ENCODE measurements at regions of chr2 and their contacts with region 1.

Region 1: GRCh38 chr2:9630749-9631483 is at the start of gene YWHAQ:
- DNase-seq: peak; percentile 95
- H3K4me3 Mint-ChIP-seq: peak within 1 kb of the TSS; percentile 97
- H3K27ac Mint-ChIP-seq: peak within 1 kb of the TSS; percentile 93
- H3K4me1 Mint-ChIP-seq: peaks cover 45% of the 10 kb centered on the region
- H3K27me3 Mint-ChIP-seq: no peaks in the 10 kb centered on the region
- total RNA-seq, gene YWHAQ: 248 to 261 TPM

Region 2: GRCh38 chr2:9112079-9112721 is 518.7 kb before region 1 on chr2:
- CTCF ChIA-PET with region 1: no interaction called
- intact Hi-C with region 1: no loop called
- DNase-seq: no peak
- H3K4me3 Mint-ChIP-seq: no peak overlapping the region
- H3K27ac Mint-ChIP-seq: no peak overlapping the region
- H3K4me1 Mint-ChIP-seq: no peaks in the 10 kb centered on the region
- H3K27me3 Mint-ChIP-seq: no peaks in the 10 kb centered on the region

Region 3: DNA sequence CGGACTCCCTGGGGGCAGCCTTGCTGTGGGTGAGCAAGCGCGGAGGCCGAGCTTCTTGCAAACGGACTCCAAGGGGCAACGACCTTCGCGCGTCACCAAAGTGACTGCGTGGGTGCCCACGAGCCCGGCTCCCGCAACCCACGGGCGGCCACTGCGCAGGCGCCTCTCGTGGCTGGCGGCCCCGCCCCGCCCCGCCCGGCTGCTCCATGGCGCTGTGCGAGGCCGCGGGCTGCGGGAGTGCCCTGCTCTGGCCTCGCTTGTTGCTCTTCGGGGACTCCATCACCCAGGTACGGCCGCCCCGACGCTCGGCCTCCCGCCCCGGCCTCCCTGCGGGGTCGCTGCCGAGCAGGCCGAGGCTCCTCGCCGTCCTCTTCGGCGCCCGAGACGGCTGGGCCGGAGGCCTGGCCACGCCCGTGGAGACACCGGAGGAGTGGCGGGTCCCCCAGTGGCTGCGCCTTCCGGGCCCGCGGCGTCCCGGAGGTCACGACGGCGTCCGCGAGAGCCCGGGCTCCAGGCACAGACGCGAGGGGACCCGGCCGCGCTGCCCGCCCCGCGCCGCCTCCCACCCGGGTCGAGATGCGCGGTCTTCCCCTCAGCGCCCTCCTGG is 156.5 kb before region 1 on chr2 and contains the start of gene IAH1:
- CTCF ChIA-PET with region 1: no interaction called
- intact Hi-C with region 1: loop called (anchors 2 kb)
- DNase-seq: peak; percentile 57
- H3K4me3 Mint-ChIP-seq: peak within 1 kb of the TSS; percentile 75
- H3K27ac Mint-ChIP-seq: peak within 1 kb of the TSS; percentile 72
- H3K4me1 Mint-ChIP-seq: peaks cover 33% of the 10 kb centered on the region
- H3K27me3 Mint-ChIP-seq: no peaks in the 10 kb centered on the region
- total RNA-seq, gene IAH1: 65.4 to 70.2 TPM

Region 4: DNA sequence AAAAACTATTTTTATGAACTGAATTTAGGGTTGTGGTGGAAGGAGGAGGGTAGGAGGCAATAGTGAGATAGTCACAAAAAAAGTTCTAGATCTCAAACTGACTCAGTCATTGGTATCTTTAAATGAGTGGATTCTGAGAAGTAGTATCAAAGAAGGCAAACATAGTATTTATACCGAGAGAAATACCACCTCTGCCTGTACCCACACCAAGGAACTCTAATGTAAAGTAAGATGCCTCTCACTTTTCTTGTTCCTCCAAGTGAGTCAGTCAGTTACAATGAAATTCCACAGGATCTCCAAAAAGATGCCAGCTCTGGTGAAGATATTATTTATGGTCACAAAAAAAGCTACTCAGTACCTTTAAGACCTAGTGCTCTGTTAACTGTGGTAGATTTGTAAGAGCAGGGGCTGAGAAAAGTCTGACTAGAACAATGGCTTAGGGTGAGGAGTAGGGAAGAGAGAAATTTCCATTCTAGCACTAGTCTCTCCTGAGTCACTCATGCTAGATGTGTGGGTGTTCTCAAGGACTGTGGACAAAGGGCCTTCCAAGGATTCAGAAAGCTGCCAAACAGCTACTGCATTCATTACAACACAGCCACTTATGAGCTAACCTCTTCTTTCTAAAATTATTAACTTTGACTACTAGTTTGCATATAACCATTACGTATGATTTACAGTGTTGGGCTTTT is 36.4 kb before region 1 on chr2:
- CTCF ChIA-PET with region 1: interaction called, 3 read pairs
- intact Hi-C with region 1: loop called (anchors 1 kb)
- DNase-seq: peak; percentile 21
- H3K4me3 Mint-ChIP-seq: peak overlapping the region; percentile 1
- H3K27ac Mint-ChIP-seq: peak overlapping the region; percentile 86
- H3K4me1 Mint-ChIP-seq: peaks cover 72% of the 10 kb centered on the region
- H3K27me3 Mint-ChIP-seq: no peaks in the 10 kb centered on the region

Region 5: GRCh38 chr2:9618410-9618809 is 12.5 kb before region 1 on chr2:
- CTCF ChIA-PET with region 1: interaction called, 3 read pairs
- intact Hi-C with region 1: loop called (anchors 1 kb)
- DNase-seq: peak; percentile 34
- H3K4me3 Mint-ChIP-seq: peak overlapping the region; percentile 62
- H3K27ac Mint-ChIP-seq: peak overlapping the region; percentile 81
- H3K4me1 Mint-ChIP-seq: peaks cover 74% of the 10 kb centered on the region
- H3K27me3 Mint-ChIP-seq: no peaks in the 10 kb centered on the region

Region 6: GRCh38 chr2:9703085-9703641 is 72.2 kb after region 1 on chr2:
- CTCF ChIA-PET with region 1: no interaction called
- intact Hi-C with region 1: loop called (anchors 2 kb)
- DNase-seq: peak; percentile 87
- H3K4me3 Mint-ChIP-seq: no peak overlapping the region
- H3K27ac Mint-ChIP-seq: no peak overlapping the region
- H3K4me1 Mint-ChIP-seq: peaks cover 25% of the 10 kb centered on the region
- H3K27me3 Mint-ChIP-seq: no peaks in the 10 kb centered on the region

Region 7: GRCh38 chr2:9778012-9778411 is 147.1 kb after region 1 on chr2:
- CTCF ChIA-PET with region 1: no interaction called
- intact Hi-C with region 1: loop called (anchors 1 kb)
- DNase-seq: peak; percentile 42
- H3K4me3 Mint-ChIP-seq: no peak overlapping the region
- H3K27ac Mint-ChIP-seq: no peak overlapping the region
- H3K4me1 Mint-ChIP-seq: peaks cover 40% of the 10 kb centered on the region
- H3K27me3 Mint-ChIP-seq: no peaks in the 10 kb centered on the region

Region 8: DNA sequence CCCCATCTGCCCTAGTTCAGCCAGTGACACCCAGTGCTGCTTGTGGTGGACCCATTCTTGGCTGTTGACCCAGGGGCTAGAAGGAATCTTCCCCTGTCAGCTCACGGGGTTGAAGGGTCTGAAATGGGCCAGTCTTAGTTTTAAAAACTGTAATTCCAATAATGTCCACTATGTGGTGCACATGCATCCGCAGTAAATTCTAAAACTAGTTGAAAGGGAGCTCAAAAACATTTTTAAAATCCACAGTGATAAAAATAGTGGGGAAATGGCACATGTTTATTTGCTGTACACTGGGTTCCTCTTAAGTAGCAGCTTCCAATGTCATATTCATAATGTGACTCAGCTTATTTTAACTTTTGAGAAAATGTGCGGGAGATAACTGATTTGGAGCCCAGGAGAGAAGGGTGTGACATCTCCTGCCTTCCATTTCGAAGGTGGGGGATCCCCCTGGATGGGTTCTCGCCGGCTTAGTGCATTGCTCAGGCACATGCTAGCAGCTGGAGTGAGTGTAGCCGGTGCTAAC is 353.4 kb after region 1 on chr2:
- CTCF ChIA-PET with region 1: no interaction called
- intact Hi-C with region 1: no loop called
- DNase-seq: peak; percentile 48
- H3K4me3 Mint-ChIP-seq: no peak overlapping the region
- H3K27ac Mint-ChIP-seq: no peak overlapping the region
- H3K4me1 Mint-ChIP-seq: peaks cover 15% of the 10 kb centered on the region
- H3K27me3 Mint-ChIP-seq: no peaks in the 10 kb centered on the region

Measured in activated naive CD4-positive, alpha-beta T cell treated with anti-CD3 and anti-CD28 coated beads for 36 hours (primary cell).